GM18951 (cell line): ENCODE measurements at regions of chrX and their contacts with region 1.

Region 1: DNA sequence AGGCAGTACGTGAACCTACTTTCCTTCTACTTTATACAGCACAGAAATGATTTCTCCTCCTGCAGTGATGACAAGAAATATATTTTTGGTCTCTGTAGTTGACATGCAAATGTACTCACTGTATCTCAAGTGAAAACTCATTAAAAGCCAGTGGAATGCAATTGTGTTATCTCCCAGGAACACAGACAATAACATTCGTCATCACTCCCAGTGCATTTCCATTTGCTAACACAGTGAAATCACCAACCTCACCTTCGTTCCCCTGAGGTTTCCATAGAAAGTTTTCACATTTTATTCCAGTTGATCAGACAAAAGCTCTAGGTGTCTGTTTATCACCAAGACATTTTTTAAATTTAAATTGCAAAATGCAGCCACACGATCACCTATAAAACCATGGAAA is 2.5 kb upstream of the SPANXD start:
- POLR2A ChIP-seq: no peak

Region 2: DNA sequence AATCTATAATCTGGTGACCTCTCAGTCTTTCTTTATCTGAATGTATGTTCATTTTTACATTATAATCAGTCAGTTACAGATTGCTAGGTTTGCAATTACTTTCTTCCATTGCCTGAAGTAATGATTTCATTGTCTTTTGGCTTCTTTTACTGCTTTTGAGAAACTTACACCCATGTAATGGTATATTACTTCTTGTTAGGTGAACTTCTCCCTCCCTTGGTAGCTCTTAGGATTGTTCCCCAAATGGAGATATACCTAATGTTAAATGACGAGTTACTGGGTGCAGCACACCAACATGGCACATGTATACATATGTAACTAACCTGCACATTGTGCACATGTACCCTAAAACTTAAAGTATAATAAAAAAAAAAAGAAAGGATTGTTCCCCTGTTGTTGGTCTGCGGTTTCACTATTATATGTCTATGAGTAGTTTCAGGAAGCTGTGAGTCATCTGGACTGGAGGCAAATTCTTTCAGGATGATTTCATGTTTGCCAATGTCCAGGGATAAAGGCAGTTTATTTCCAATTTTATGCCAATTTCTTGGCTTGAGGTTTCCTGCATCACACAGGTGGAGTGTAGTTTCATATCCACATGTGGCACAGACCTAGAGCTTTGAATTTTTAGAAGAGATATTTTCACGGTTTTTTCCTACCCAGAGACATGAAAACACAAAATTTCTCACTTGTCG is 480.6 kb before region 1 on chrX:
- in situ Hi-C with region 1: loop called (anchors 25 kb)
- POLR2A ChIP-seq: no peak